ENCODE measurements at regions of chr1 and their contacts with region 1.

Region 1: DNA sequence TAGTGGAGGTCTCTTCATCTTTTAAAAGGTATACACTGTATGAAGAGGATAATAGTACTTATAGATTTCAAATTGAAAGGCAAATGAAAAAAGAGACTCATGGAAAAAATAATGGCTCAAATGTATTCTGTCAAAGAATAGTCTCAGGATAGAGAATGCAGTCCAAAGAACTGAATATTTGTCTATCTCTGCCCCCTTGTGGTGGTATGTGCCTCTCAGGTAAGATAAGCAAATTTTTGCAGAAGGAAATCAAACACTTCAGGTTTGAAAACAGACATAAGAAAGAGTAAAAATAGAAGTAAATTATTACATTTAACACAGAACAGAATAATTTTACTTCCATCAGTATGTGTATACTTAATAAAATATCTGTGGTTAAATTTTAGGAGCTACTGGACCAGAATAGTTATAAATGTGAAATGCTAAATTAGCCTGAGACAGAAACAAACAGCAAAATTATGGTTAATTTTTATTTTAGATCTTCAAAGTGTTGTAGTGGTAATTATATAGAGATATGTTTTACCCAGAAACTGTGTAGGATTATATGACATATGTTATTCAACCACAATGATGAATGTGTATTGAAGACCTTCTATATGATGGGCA is 164.4 kb upstream of the PALMD start:
- DNase-seq: no peak
- ATAC-seq: peak; percentile 82
- H3K4me3 ChIP-seq: no peak overlapping the region
- H3K27ac ChIP-seq: no peak overlapping the region
- H3K4me1 ChIP-seq: no peaks in the 10 kb centered on the region
- H3K27me3 ChIP-seq: peaks cover 0 to 2% of the 10 kb centered on the region in 2 experiments; a peak in 1 of 4 replicates
- CTCF ChIP-seq: peak; percentile 62 to 71 (median 63)
- EP300 ChIP-seq: no peak
- POLR2A ChIP-seq: no peak
- RAD21 ChIP-seq: peak; percentile 87

Region 2: GRCh38 chr1:99180343-99180808 is 301.1 kb before region 1 on chr1:
- CTCF ChIA-PET with region 1: interaction called, 66 read pairs
- POLR2A ChIA-PET with region 1: no interaction called
- RAD21 ChIA-PET with region 1: interaction called, 33 read pairs
- SMC1A ChIA-PET with region 1: interaction called, 23 read pairs
- in situ Hi-C with region 1: loop called (anchors 10 kb)
- intact Hi-C with region 1: loop called (anchors 1 kb)
- DNase-seq: peak; percentile 25
- ATAC-seq: peak; percentile 98
- H3K4me3 ChIP-seq: no peak overlapping the region
- H3K27ac ChIP-seq: no peak overlapping the region
- H3K4me1 ChIP-seq: no peaks in the 10 kb centered on the region
- H3K27me3 ChIP-seq: no peaks in the 10 kb centered on the region
- CTCF ChIP-seq: peak; percentile 69 to 87 (median 73)
- EP300 ChIP-seq: no peak
- POLR2A ChIP-seq: no peak
- RAD21 ChIP-seq: peak; percentile 92

Measured in GM12878 (cell line).